HEK293 (cell line): ENCODE measurements at regions of chr19 and their contacts with region 1.

Region 1: GRCh38 chr19:32224371-32225244 is 120.8 kb upstream of the ZNF507 start:
- H3K4me3 ChIP-seq: no peak overlapping the region
- H3K27ac ChIP-seq: no peak overlapping the region
- H3K4me1 ChIP-seq: peaks cover 10% of the 10 kb centered on the region
- CTCF ChIP-seq: peak; percentile 97

Region 2: DNA sequence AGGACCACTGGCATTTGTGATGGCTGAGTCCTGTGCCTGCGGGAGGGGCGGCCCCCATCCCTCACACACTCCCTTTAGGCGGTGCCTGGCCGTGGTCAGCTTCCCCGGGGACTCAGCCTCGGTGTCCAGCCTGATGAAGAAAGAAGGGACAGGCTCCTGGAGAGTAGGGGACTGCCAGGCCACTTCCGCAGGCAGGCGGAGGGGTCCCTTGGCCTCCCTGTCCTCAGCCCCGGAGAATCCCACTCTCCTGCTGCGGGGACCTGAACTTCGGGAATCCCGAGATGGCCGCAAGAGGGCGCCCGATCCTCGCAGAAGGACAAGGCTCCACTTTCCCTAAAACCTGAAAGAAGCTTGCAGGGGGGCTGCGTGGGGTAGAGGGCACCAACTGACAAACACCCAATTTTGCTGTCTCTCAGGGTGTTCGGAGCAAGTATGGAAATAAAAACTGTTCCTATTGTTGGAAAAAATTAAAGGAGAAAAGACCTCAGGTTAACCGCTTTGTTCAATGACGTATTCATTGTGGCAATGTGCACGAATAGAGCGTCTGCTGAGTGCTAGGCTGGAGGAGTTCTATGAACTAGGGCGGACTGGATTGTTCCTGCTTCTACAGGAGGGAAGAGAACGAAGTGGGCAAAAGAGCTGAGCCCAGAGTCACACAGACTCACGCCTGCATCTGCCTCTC is 1555.1 kb before region 1 on chr19:
- CTCF ChIA-PET with region 1: interaction called, 16 read pairs
- POLR2A ChIA-PET with region 1: no interaction called
- H3K4me3 ChIP-seq: no peak overlapping the region
- H3K27ac ChIP-seq: no peak overlapping the region
- H3K4me1 ChIP-seq: peaks cover 15% of the 10 kb centered on the region
- CTCF ChIP-seq: peak; percentile 92

Region 3: DNA sequence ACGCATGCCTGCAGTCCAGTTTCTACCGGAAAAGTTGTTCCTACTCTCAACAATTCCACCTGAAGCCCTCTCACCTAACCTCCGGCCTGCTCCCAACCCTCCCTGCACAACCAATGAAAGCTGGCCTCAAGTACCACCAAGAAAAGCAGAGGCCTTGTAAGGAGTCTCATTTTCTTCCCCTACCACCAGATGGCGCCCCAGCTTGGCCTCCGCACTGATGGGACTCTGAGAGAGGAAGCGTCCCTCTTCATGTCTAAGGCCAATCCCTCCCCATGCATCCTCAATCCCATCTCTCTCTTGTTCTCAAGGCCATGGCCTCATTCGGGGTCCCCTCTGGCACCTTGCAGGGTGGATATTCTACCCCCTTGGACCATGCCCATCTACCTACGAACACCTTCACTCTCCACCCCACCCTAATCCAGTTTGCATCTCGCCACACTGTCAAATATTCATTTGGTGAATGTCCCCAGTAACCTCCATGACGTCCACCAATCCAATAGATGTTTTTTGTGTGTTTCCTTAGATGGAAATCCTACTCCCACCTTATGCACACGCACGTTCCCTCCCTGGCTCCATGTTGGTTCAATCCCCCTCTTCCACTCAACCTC is 1439.7 kb before region 1 on chr19:
- CTCF ChIA-PET with region 1: interaction called, 20 read pairs
- POLR2A ChIA-PET with region 1: no interaction called
- H3K4me3 ChIP-seq: no peak overlapping the region
- H3K27ac ChIP-seq: no peak overlapping the region
- H3K4me1 ChIP-seq: no peaks in the 10 kb centered on the region
- CTCF ChIP-seq: peak; percentile 92

Region 4: DNA sequence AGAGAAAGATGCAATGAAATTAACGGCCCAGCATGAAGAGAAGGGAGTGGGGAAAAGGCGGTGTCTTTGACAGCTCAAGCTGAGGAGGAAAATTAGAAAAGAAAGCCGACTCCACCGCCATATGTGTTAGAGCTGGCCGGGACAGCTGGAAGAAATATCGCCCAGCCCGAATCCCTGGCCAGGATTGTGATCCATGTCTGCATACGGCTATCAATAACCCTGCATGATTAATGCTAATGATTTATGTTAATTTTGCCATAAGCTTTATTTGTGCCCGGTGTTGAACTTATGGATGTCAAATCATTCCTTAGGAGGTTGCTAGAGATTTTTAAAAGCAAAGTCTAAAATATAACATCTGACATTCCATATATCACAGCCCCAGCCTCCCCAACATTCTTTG is 142.6 kb before region 1 on chr19:
- CTCF ChIA-PET with region 1: interaction called, 12 read pairs
- POLR2A ChIA-PET with region 1: interaction called, 3 read pairs
- H3K4me3 ChIP-seq: no peak overlapping the region
- H3K27ac ChIP-seq: no peak overlapping the region
- H3K4me1 ChIP-seq: no peaks in the 10 kb centered on the region
- CTCF ChIP-seq: no peak

Region 5: DNA sequence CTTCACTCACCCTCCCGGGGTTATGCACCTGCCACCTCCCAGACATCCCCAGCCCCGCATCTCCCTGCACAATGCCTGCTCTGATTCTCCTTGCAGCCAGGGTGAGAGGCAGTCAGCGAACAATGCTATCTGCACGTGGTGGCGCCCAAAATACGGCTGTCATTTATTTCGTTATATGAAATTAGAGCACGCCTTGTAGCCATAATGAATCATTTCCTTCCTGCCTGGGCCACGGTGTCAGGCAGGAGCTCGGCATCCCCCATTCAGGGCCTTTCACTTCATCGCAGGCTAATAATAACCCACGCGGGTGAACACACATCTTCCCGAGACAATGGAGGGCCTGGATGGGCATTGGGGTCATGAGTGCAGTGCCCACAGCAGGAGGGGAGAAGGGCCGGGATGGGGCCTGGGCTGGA is 23.0 kb before region 1 on chr19:
- CTCF ChIA-PET with region 1: interaction called, 13 read pairs
- POLR2A ChIA-PET with region 1: no interaction called
- H3K4me3 ChIP-seq: no peak overlapping the region
- H3K27ac ChIP-seq: no peak overlapping the region
- H3K4me1 ChIP-seq: no peaks in the 10 kb centered on the region
- CTCF ChIP-seq: no peak

Region 6: DNA sequence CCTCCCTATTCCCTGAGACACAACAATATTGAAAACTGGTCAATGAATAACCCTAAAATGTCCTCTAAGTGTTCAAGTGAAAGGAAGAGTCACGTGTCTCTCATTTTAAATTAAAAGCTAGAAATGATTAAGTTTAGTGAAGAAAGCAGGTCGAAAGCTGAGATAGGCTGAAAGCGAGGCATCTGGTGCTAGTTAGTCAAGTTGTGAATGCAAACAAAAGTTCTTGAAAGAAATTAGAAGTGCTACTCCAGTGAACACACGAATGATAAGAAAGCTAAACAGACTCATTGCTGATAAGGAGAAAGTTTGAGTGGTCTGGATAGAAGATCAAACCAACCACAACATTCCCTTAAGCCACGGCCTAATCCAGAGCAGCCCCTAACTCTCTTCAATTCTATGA is 21.4 kb after region 1 on chr19:
- CTCF ChIA-PET with region 1: interaction called, 10 read pairs
- POLR2A ChIA-PET with region 1: no interaction called
- H3K4me3 ChIP-seq: no peak overlapping the region
- H3K27ac ChIP-seq: no peak overlapping the region
- H3K4me1 ChIP-seq: peaks cover 3% of the 10 kb centered on the region
- CTCF ChIP-seq: no peak